ENCODE measurements at regions of chr5 and their contacts with region 1.

Region 1: GRCh38 chr5:94326579-94326978 is 291.8 kb downstream of the KIAA0825 start:
- DNase-seq: no peak
- H3K4me3 ChIP-seq: no peak overlapping the region
- H3K27ac ChIP-seq: no peak overlapping the region
- H3K4me1 ChIP-seq: no peaks in the 10 kb centered on the region
- H3K27me3 ChIP-seq: no peaks in the 10 kb centered on the region
- CTCF ChIP-seq: no peak
- POLR2A ChIP-seq: no peak

Region 2: DNA sequence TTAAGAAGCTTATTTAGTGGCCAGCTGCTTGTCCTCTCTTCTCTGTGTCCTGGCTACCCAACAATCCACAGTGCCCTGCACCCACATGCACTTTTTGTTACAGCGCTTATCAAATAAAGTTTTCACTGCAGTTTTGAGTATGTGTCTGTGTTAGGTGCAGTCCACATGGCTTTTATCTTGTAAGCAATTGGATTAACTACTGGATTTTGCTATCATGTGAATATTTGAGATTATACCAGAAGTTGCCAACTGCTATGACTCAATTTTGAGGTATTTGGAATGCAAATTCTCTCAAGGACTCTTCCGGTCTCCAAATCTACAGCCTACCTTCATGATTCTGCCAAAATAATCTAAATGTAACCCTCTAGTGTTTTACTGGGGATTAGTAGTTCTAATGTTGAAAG is 1435.7 kb before region 1 on chr5:
- intact Hi-C with region 1: loop called (anchors 5 kb)
- DNase-seq: no peak
- H3K4me3 ChIP-seq: no peak overlapping the region
- H3K27ac ChIP-seq: no peak overlapping the region
- H3K4me1 ChIP-seq: peaks cover 9% of the 10 kb centered on the region
- H3K27me3 ChIP-seq: no peaks in the 10 kb centered on the region
- CTCF ChIP-seq: no peak
- POLR2A ChIP-seq: no peak

Measured in vagina (tissue), 2 donors.